Activated T-helper 1 cell treated with anti-CD3 and anti-CD28 coated beads, Interleukin-12 subunit alpha, Interleukin-12 subunit beta, Interleukin-2, Interleukin-4 antibody, amounts not matched to agents 30 ng/mL and 10 ng/mL and 1 ng/mL, durations not matched to agents 14 hours and 24 hours and 36 hours (primary cell): ENCODE measurements at regions of chr16 and their contacts with region 1.

Region 1: DNA sequence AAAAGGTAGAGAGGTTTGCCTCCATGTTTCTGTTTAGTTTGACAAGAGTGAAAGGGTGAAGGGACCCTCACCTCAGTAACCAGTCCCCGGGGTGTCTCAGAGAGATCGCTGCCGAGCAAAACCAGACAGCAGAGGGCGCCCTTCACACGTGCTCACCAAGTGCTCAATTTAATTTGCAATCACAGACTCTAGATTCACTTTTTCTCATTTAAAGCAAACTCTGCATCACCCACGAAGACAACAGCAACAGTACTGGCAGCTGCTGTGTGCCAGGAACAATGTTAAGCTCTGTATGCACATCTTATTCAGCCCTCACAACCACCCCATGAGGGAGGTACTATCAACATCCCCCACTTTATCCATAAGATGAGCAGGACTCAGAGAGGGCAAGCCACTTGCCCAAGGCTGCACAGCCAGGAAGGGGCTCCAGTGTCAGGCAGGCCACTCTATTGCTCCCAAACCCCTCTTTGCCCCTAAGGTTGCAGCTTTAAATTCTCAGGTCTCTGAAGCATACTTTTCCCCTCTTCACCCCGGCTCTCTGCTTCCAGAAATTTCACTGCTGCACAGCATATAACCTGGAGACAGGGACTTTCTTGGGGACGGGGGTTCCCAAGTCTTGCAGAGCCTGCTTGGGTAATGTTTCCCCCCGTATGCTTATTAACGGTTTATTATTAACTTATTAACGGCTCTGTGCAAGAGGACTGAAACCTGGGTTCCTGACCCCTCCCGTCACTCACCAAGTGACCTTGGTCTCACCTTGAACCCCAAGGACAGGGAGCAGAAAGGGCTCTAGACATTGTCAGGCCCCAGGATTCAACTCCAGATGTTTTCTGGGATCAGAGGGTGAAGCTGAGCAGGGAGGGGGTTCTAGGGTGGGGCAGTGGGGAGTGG is 70.9 kb downstream of the CNGB1 start:
- DNase-seq: peak; percentile 61
- H3K4me3 Mint-ChIP-seq: no peak overlapping the region
- H3K27ac Mint-ChIP-seq: no peak overlapping the region
- H3K4me1 Mint-ChIP-seq: peaks cover 2% of the 10 kb centered on the region
- H3K27me3 Mint-ChIP-seq: peaks cover 9% of the 10 kb centered on the region

Region 2: DNA sequence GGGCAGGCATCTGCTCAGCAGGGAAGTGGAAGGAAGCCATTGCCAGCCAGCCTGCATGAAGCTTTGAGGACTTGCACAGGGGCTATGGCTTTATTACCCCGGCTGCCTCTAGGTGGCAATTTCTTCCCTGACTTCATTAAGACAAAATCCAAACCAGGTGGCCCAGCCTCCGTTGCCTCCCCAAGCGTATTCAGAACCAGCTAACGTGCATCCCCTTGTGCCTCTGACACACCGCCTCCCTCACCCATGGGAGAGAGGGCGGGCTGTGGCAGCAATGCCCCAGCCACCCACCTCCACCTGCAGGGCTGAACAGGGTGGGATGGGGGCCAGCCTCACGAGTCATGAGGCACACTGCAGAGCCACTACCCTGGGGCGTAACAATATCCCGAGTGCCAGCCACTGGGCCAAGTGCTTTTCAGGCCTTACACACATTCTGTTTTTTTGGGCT is 104.6 kb before region 1 on chr16:
- intact Hi-C with region 1: loop called (anchors 10 kb)
- DNase-seq: no peak
- H3K4me3 Mint-ChIP-seq: no peak overlapping the region
- H3K27ac Mint-ChIP-seq: no peak overlapping the region
- H3K4me1 Mint-ChIP-seq: peaks cover 14% of the 10 kb centered on the region
- H3K27me3 Mint-ChIP-seq: peaks cover 19% of the 10 kb centered on the region